ENCODE measurements at regions of chr17 and their contacts with region 1.

Region 1: DNA sequence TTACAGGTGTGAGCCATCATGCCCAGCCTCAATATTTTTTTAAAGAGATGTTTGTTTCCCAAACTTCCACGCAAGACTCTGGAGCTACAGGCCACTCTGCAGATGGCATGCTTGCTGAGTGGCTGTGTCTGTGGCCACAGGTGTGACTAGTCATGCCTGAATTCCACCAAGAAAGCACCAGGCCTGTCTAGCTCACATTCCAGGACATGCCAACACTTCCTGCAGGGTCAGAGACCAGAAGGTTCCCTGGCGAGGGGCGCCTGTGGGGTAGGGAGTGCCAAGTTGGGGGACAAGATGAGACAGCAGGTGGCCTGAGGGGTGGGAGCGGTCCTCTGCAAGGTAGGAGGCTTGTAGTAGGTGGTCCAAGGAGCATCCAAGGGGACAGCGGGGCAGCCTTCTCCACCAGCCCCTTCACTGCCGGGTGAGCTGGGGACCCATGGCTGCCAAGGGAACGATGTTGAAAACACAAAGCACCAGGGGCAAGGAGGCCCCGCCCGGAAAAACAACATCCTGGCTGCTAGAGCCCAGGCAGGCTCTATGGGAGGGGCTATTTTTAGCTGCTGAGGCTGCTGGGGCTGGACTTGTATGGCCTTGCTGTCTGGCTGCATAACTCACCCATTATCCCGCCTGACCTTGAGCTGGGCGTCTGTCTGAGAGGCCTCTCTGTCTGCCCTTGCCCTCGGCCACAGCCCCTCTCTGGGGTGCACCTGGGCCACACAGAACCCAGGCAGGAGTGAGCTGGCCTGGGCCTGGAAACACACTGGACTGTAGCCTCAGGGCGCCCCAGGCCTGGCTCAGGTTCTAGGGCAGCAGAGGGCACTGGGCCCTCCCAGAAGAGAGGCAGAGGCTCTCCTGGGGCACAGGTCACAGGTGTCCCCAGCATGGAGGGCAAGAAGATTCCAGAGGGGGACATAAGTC is 5.7 kb downstream of the TRIM47 start:
- DNase-seq: peak; percentile 86
- H3K4me3 Mint-ChIP-seq: peak overlapping the region; percentile 24
- H3K27ac Mint-ChIP-seq: peak overlapping the region; percentile 96
- H3K4me1 Mint-ChIP-seq: peaks cover 50% of the 10 kb centered on the region
- H3K27me3 Mint-ChIP-seq: no peaks in the 10 kb centered on the region

Region 2: GRCh38 chr17:75896415-75897159 is 23.9 kb after region 1 on chr17 and contains the start of gene TRIM65:
- CTCF ChIA-PET with region 1: interaction called, 42 read pairs
- POLR2A ChIA-PET with region 1: interaction called, 151 read pairs
- DNase-seq: peak; percentile 83
- H3K4me3 Mint-ChIP-seq: peak within 1 kb of the TSS; percentile 81
- H3K27ac Mint-ChIP-seq: peak within 1 kb of the TSS; percentile 74
- H3K4me1 Mint-ChIP-seq: peaks cover 24% of the 10 kb centered on the region
- H3K27me3 Mint-ChIP-seq: no peaks in the 10 kb centered on the region
- total RNA-seq, gene TRIM65: 24.9 to 26.1 TPM

Region 3: GRCh38 chr17:75913537-75914210 is 41.0 kb after region 1 on chr17:
- CTCF ChIA-PET with region 1: no interaction called
- POLR2A ChIA-PET with region 1: no interaction called
- DNase-seq: no peak
- H3K4me3 Mint-ChIP-seq: no peak overlapping the region
- H3K27ac Mint-ChIP-seq: no peak overlapping the region
- H3K4me1 Mint-ChIP-seq: peaks cover 13% of the 10 kb centered on the region
- H3K27me3 Mint-ChIP-seq: no peaks in the 10 kb centered on the region

Measured in activated CD4-positive, alpha-beta memory T cell treated with anti-CD3 and anti-CD28 coated beads, Interleukin-2, amount 10 ng/mL, durations not matched to agents 7 days and 5 days (primary cell).